ENCODE measurements at regions of chr1 and their contacts with region 1.

Region 1: GRCh38 chr1:3900119-3900968 is at the start of gene C1orf174:
- DNase-seq: peak; percentile 88 to 98 (median 96)
- H3K4me3 ChIP-seq: peak within 1 kb of the TSS; percentile 72 to 100 (median 96)
- H3K27ac ChIP-seq: peak within 1 kb of the TSS; percentile 93 to 100 (median 99)
- H3K27me3 ChIP-seq: no peaks in the 10 kb centered on the region
- CTCF ChIP-seq: peak in 9 of 56 donors; percentile 6 to 19 (median 13)
- total RNA-seq, gene C1orf174: 8.6 to 24.2 (median 15.2) TPM

Region 2: DNA sequence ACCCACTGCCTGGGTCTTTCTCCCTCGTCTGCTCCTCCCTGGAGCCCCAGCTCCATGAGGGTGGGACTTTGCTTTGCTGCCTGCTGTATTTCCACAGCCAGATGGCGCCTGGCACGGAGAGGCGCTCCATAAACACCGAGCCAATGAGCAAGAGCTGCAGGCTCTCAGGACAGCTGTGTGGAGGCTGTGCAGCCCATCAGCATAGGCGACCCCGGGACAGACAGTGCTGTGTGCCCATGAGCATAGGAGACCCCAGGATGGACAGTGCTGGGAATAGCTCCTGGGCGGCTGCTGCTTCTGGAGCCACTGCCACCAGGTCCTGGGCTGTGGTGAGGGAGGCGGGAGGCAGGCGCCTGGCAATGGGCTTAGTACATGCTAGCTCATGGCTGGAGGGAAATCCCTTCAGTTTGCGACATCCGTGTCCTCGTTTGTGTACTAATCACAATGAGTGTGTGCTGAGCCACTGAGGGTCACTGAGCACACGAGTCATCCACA is 72.5 kb before region 1 on chr1:
- intact Hi-C with region 1: loop called in 1 of 2 experiments (anchors 2 kb)
- DNase-seq: peak in 7 of 10 donors; percentile 46 to 71 (median 57)
- H3K4me3 ChIP-seq: no peak overlapping the region
- H3K27ac ChIP-seq: peak overlapping the region in 44 of 59 donors; percentile 8 to 87 (median 60)
- H3K27me3 ChIP-seq: no peaks in the 10 kb centered on the region
- CTCF ChIP-seq: peak in 44 of 56 donors; percentile 8 to 67 (median 40)

Region 3: DNA sequence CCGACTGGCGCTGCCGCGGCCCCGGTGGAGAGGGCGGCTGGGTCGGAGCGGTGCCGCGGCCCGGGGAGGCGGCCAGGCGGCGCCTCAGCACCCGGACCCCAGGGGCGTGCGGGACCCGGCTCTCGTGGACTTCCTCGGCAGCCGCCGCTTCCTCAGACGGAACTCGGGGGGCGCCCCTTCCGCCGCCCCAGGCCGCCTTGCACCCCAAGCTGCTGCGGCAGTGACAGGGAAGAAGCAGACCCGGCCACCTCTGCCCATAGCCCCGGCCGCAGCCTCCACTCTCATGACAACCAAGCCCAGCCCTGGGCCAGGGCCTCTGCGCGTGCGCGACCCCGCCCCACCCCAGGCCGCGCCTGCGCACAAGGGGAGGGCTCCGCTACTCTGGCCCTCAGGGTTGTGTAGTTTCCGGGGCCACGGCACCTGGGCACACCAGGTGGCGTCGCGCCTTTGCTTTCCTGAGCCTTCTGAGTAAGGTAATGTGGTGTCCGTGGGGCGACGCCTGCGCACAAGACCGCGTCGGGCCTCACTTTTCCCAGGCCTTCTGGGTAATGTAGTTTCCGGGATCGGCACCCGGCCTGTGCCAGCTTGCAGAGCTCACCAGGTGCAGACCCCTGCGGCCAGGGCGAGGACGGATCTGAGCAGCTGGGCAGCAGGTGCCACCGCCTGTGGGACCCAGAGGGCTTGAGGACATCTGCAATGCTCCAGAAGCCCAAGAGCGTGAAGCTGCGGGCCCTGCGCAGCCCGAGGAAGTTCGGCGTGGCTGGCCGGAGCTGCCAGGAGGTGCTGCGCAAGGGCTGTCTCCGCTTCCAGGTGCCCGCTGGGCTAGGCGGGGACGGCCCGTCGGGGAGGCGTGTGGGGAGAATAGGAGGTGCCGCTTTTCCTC is 43.2 kb before region 1 on chr1 and contains the starts of genes CEP104 and DFFB:
- intact Hi-C with region 1: loop called (anchors 2 kb)
- DNase-seq: peak; percentile 76 to 95 (median 90)
- H3K4me3 ChIP-seq: peak within 1 kb of the TSS; percentile 66 to 100 (median 94)
- H3K27ac ChIP-seq: peak within 1 kb of the TSS; percentile 19 to 95 (median 81)
- H3K27me3 ChIP-seq: no peaks in the 10 kb centered on the region
- CTCF ChIP-seq: peak in 40 of 56 donors; percentile 11 to 63 (median 39)
- total RNA-seq, gene CEP104: 37.8 to 83.4 (median 59.1) TPM
- total RNA-seq, gene DFFB: 6.3 to 27.1 (median 16.6) TPM

Region 4: DNA sequence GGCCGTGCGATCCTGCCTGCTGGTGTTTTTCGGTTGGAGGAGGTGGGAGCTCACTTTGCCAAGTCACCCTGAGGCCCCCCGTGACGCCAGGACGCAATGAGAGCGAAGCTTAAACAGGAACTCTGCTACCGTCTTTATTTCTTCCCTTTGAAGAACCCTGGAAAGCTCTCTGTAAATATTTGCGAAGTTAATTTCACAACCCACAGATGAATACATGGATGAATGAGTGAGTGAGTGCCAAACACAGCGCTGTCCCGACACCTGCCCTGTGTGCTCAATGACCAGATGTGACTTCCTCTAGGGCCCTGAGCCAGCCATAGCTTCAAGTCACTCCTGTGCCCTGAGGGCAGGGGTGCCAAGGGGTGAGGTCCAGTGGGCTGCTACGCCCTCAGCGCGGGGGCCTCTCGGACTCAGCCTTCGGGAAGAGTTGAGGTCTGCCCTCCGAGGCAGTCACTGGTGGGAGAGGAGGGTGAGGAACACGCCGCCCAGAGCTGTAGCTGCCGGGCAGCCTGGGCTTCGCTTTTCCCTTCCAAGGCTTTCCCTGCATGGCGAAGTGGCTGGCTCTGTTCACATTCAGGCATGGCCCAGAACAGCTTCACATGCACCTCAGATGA is 42.6 kb after region 1 on chr1:
- intact Hi-C with region 1: no loop called
- DNase-seq: no peak
- H3K4me3 ChIP-seq: no peak overlapping the region
- H3K27ac ChIP-seq: no peak overlapping the region
- H3K27me3 ChIP-seq: peaks cover 0 to 25% (median 0%) of the 10 kb centered on the region in 45 donors
- CTCF ChIP-seq: no peak

Measured in dorsolateral prefrontal cortex (tissue), 120 donors.